Activated CD4-positive, alpha-beta T cell treated with anti-CD3 and anti-CD28 coated beads for 36 hours (primary cell): ENCODE measurements at regions of chr16 and their contacts with region 1.

Region 1: DNA sequence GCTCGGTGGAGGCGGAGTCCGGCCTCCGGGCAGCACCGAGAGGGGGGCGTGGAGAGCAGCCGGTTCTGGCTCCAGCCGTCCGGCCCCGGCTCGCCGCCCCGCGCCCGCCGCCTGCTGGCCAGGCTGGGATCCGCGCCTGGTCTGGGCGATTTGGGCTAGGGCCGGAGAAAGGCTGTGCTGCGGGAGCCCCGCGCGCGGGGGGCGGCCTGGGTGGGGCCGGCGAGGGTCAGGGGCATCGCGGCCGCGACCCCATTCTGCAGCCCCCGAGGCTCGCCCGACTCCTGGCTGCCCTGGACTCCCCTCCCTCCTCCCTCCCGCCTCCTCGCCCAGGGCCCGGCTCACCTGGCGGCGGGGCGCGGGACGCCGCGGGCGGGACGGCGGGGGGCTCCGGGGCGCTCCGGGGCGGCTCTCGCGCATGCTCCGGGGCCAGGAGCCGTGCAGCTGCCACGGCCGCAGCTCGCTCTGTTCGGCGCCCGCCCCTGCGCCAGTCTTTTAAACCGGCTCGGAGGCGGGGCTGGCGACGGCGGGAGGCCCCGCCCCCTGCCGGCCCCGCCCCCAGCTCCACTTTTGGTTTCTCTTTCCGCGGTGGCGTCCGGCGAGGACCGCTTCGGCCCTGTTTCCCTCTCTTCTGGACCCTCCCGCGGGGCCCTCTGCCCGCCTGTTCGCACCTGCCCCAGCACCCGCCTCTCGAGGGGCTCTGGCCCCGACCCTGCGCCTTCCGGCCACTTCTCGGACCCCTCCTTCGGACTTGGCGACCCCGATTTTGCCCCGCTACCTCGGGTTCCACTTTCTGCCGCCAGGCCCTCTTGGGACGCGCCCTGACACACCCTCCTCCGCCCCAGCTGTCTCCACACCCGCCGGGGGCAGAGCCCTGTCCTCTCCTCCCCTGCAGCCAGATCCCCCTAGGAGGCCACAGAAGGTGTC is at the start of gene SOCS1:
- DNase-seq: peak; percentile 94
- ATAC-seq: peak; percentile 54
- H3K4me3 Mint-ChIP-seq: peak within 1 kb of the TSS; percentile 98
- H3K27ac Mint-ChIP-seq: peak within 1 kb of the TSS; percentile 98
- H3K4me1 Mint-ChIP-seq: peaks cover 46% of the 10 kb centered on the region
- H3K27me3 Mint-ChIP-seq: no peaks in the 10 kb centered on the region
- total RNA-seq, gene SOCS1: 100.0 to 103 TPM

Region 2: DNA sequence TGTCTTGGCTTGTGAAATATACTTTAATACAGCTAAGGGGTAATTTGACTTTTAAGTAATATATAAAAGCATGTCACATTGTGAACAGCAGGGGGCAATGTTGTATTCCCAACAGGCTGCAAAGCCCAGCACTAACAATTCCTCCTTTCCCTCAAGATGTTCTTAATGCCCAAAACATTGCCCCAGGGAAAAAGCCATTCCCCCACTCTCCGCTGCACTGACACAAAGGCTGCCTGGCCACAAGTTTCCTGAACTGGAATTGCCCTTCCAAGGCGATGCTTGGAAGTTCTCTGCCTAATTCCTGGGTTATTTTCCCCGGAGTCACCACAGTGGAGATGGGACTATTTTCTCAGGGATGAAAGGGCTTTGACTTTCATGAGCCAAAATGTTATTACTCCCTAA is 284.4 kb before region 1 on chr16:
- CTCF ChIA-PET with region 1: interaction called, 8 read pairs
- POLR2A ChIA-PET with region 1: interaction called, 49 read pairs
- intact Hi-C with region 1: loop called (anchors 1 kb)
- DNase-seq: peak; percentile 47
- ATAC-seq: peak; percentile 40
- H3K4me3 Mint-ChIP-seq: no peak overlapping the region
- H3K27ac Mint-ChIP-seq: peak overlapping the region; percentile 21
- H3K4me1 Mint-ChIP-seq: peaks cover 35% of the 10 kb centered on the region
- H3K27me3 Mint-ChIP-seq: no peaks in the 10 kb centered on the region

Region 3: DNA sequence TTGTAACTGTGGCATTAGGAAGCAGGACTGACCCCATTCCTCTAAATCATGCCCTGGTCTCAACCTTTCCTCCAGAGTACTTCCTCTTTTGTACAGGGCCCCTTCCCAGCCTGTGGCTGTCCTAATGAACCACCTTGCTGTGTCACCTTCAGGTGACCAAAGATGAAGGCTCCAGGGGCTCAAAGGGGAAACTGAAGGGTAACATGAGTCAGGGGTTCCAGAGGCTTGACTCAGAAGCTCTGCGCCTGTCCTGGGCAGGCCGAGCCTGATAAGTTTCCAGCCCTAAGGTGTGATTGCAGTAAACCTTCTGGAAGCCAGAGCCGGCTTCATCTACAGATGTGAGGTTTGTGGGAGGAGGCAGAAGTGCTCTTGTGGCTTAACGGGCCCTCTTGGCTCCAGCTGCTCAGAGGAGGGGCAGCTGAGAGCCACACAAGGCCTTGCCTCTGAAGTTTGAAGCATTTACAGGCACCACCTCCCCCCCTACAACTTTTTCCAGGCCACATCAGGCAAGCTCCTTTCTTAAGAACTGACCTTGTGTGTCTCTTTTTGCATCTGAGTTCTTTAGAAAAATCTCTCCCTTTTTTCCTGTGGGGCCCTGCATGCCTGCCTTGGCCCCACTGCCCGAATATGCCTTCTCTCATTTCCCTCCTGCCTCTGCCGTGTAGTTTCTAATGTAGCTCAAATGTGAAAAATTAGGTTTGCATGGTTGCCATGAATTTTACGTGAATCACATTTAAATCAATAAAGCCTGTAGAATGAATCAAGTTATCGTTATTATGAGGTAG is 161.7 kb before region 1 on chr16:
- CTCF ChIA-PET with region 1: interaction called, 6 read pairs
- POLR2A ChIA-PET with region 1: interaction called, 26 read pairs
- intact Hi-C with region 1: loop called (anchors 1 kb)
- DNase-seq: peak; percentile 87
- ATAC-seq: peak; percentile 77
- H3K4me3 Mint-ChIP-seq: peak overlapping the region; percentile 53
- H3K27ac Mint-ChIP-seq: peak overlapping the region; percentile 99
- H3K4me1 Mint-ChIP-seq: peaks cover 86% of the 10 kb centered on the region
- H3K27me3 Mint-ChIP-seq: no peaks in the 10 kb centered on the region

Region 4: GRCh38 chr16:11232852-11233726 is 22.9 kb before region 1 on chr16:
- CTCF ChIA-PET with region 1: interaction called, 6 read pairs
- POLR2A ChIA-PET with region 1: interaction called, 18 read pairs
- intact Hi-C with region 1: loop called (anchors 1 kb)
- DNase-seq: peak; percentile 96
- ATAC-seq: peak; percentile 82
- H3K4me3 Mint-ChIP-seq: peak overlapping the region; percentile 60
- H3K27ac Mint-ChIP-seq: peak overlapping the region; percentile 97
- H3K4me1 Mint-ChIP-seq: peaks cover 80% of the 10 kb centered on the region
- H3K27me3 Mint-ChIP-seq: no peaks in the 10 kb centered on the region

Region 5: GRCh38 chr16:11356573-11357331 is 100.8 kb after region 1 on chr16:
- CTCF ChIA-PET with region 1: interaction called, 12 read pairs
- POLR2A ChIA-PET with region 1: interaction called, 25 read pairs
- intact Hi-C with region 1: loop called (anchors 1 to 2 kb)
- DNase-seq: peak; percentile 79
- ATAC-seq: no peak
- H3K4me3 Mint-ChIP-seq: peak overlapping the region; percentile 46
- H3K27ac Mint-ChIP-seq: peak overlapping the region; percentile 23
- H3K4me1 Mint-ChIP-seq: peaks cover 67% of the 10 kb centered on the region
- H3K27me3 Mint-ChIP-seq: peaks cover 7% of the 10 kb centered on the region

Region 6: GRCh38 chr16:11439790-11440656 is 184.0 kb after region 1 on chr16:
- CTCF ChIA-PET with region 1: no interaction called
- POLR2A ChIA-PET with region 1: no interaction called
- intact Hi-C with region 1: no loop called
- DNase-seq: no peak
- ATAC-seq: no peak
- H3K4me3 Mint-ChIP-seq: no peak overlapping the region
- H3K27ac Mint-ChIP-seq: no peak overlapping the region
- H3K4me1 Mint-ChIP-seq: no peaks in the 10 kb centered on the region
- H3K27me3 Mint-ChIP-seq: no peaks in the 10 kb centered on the region

Region 7: GRCh38 chr16:11515540-11516430 is 259.8 kb after region 1 on chr16:
- CTCF ChIA-PET with region 1: no interaction called
- POLR2A ChIA-PET with region 1: no interaction called
- intact Hi-C with region 1: no loop called
- DNase-seq: no peak
- ATAC-seq: no peak
- H3K4me3 Mint-ChIP-seq: no peak overlapping the region
- H3K27ac Mint-ChIP-seq: no peak overlapping the region
- H3K4me1 Mint-ChIP-seq: no peaks in the 10 kb centered on the region
- H3K27me3 Mint-ChIP-seq: no peaks in the 10 kb centered on the region

Region 8: DNA sequence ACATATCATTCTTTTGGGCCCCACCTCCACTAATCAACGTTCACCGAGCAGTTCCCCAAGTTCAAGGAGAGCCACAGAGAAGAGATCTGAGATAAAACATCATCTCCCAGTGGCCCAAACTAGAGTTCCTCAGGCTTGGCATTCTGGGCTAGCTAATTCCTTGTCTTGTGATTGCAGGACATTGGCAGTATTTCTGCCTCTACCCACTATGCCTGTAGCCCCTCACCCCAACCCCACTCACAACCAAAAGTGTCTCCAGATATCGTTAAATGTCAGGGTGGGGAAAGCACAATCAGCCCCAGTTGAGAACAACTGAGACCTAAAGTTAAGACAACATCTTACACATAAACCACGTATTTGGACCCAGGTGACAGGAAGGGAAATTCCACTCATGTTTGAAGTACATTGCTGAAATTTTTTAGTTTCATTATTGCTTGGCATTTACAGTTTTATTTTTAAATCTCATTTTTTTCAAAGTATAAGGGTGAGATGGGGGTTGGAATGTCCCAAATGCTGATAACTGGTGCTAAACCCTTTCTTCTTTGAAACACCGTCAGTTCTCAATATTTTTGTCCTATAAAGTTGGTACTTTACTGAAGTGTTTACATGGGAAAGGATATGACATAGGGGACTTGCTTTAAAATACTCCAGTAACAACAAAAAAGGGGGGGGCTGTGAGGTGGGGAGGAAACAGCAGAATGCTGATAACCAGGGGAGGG is 527.5 kb after region 1 on chr16:
- CTCF ChIA-PET with region 1: no interaction called
- POLR2A ChIA-PET with region 1: no interaction called
- intact Hi-C with region 1: loop called in 1 of 2 experiments (anchors 5 kb)
- DNase-seq: peak; percentile 65
- ATAC-seq: peak; percentile 80
- H3K4me3 Mint-ChIP-seq: peak overlapping the region; percentile 74
- H3K27ac Mint-ChIP-seq: peak overlapping the region; percentile 97
- H3K4me1 Mint-ChIP-seq: peaks cover 74% of the 10 kb centered on the region
- H3K27me3 Mint-ChIP-seq: no peaks in the 10 kb centered on the region